ENCODE measurements at regions of chr15 and their contacts with region 1.

Region 1: DNA sequence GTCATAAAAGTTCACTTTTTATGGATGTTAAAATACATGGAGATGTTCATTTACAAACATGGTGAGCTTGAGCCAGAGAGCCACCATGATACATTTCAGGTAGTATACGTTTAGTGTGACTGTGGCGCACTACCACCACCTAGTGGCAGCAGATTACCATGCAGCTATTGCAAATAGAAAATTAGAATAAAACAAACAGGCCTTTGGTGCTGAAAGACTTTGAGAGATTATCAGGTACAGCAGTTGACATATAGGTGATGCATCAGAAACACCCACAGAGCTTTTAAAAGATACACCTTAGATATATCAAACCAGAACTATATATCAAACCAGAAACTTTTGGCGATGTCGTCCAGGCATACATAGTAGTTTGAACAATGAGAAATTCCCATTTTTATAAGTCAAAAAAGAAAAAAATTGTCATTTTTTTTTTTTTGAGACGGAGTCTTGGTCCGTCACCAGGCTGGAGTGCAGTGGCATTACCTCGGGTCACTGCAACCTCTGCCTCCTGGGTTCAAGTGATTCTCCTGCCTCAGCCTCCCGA is 42.0 kb upstream of the ICE2 start:
- DNase-seq: no peak
- ATAC-seq: peak; percentile 92
- H3K4me3 ChIP-seq: no peak overlapping the region
- H3K27ac ChIP-seq: peak overlapping the region; percentile 67
- H3K4me1 ChIP-seq: peaks cover 16% of the 10 kb centered on the region
- H3K27me3 ChIP-seq: no peaks in the 10 kb centered on the region
- CTCF ChIP-seq: peak; percentile 74 to 86 (median 86)
- EP300 ChIP-seq: no peak
- POLR2A ChIP-seq: no peak
- RAD21 ChIP-seq: peak; percentile 83

Region 2: GRCh38 chr15:60362321-60363086 is 158.4 kb before region 1 on chr15:
- CTCF ChIA-PET with region 1: interaction called, 74 read pairs
- POLR2A ChIA-PET with region 1: no interaction called
- RAD21 ChIA-PET with region 1: interaction called, 10 read pairs
- SMC1A ChIA-PET with region 1: interaction called, 20 read pairs
- in situ Hi-C with region 1: no loop called
- intact Hi-C with region 1: loop called (anchors 1 kb)
- DNase-seq: no peak
- ATAC-seq: no peak
- H3K4me3 ChIP-seq: no peak overlapping the region
- H3K27ac ChIP-seq: no peak overlapping the region
- H3K4me1 ChIP-seq: no peaks in the 10 kb centered on the region
- H3K27me3 ChIP-seq: no peaks in the 10 kb centered on the region
- CTCF ChIP-seq: no peak
- EP300 ChIP-seq: no peak
- POLR2A ChIP-seq: no peak
- RAD21 ChIP-seq: no peak

Region 3: DNA sequence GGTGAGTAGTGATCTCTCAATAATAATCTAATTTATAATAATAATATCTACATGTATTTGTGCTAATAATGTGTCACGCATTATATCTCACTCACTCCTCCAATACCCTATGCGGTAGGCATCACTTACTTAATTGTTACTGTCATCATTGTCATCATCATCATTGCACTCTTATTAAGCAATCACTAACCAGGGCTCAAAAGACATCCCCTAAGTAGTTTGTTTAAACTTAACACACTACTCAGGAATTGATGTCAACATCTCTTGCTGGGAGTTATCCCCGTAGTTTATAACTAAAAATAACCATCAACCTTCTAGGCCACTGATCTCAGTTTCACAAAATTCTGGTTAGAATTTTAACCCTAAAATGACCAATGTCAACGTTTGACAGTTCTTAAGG is 14.8 kb after region 1 on chr15:
- CTCF ChIA-PET with region 1: interaction called, 52 read pairs
- POLR2A ChIA-PET with region 1: interaction called, 4 read pairs
- RAD21 ChIA-PET with region 1: interaction called, 12 read pairs
- SMC1A ChIA-PET with region 1: interaction called, 33 read pairs
- in situ Hi-C with region 1: no loop called
- intact Hi-C with region 1: no loop called
- DNase-seq: no peak
- ATAC-seq: no peak
- H3K4me3 ChIP-seq: no peak overlapping the region
- H3K27ac ChIP-seq: no peak overlapping the region
- H3K4me1 ChIP-seq: 0 out of 2 replicates have a peak, but pooled peaks cover 3% of the 10 kb centered on the region
- H3K27me3 ChIP-seq: no peaks in the 10 kb centered on the region
- CTCF ChIP-seq: no peak
- EP300 ChIP-seq: no peak
- POLR2A ChIP-seq: no peak
- RAD21 ChIP-seq: no peak

Region 4: DNA sequence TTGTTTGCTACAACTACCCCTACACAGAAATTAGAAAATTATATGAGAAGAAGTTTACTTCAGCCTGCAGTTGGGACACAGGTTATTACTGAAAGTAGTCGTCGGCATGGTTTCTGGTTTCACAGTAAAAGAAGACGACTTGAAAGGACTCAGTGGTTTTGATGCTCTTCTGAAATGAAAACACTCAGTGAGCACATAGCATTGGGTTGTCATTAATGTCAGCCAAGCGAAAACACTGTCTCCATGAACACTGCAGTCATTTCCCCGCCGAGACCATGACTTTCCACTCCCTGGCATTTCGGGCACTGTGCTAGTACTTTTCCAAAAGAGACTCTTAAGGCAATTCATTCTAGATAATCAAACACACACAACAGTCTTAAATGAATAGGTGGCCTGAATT is 27.2 kb after region 1 on chr15:
- CTCF ChIA-PET with region 1: interaction called, 82 read pairs
- POLR2A ChIA-PET with region 1: interaction called, 3 read pairs
- RAD21 ChIA-PET with region 1: interaction called, 24 read pairs
- SMC1A ChIA-PET with region 1: interaction called, 27 read pairs
- in situ Hi-C with region 1: no loop called
- intact Hi-C with region 1: loop called (anchors 2 kb)
- DNase-seq: peak; percentile 85
- ATAC-seq: peak; percentile 86
- H3K4me3 ChIP-seq: peak overlapping the region; percentile 11; the same call in 1 of the 2 replicates
- H3K27ac ChIP-seq: peak overlapping the region; percentile 66
- H3K4me1 ChIP-seq: peaks cover 49% of the 10 kb centered on the region
- H3K27me3 ChIP-seq: no peaks in the 10 kb centered on the region
- CTCF ChIP-seq: no peak
- EP300 ChIP-seq: peak; percentile 66 to 76
- POLR2A ChIP-seq: no peak
- RAD21 ChIP-seq: peak; percentile 10; the same call in 1 of the 2 replicates

Region 5: DNA sequence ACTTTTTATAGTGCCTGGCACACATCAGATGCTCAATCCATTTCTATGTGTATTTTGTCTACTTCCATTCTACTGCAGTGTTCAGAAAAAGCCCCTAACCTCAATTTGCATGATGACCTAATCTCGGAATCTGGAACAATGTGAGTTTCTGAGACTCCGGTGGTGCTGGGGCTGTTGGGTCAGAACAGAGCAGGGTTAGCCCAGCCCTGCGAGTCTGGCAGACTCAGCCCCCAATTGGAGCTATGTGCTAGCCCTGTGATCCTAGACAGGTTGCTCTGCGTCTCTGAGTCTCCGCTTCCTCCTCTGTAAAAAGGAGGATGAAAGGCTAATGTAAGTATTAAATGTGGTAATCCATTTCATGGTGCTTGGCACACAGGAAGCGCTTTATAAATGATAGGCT is 53.0 kb after region 1 on chr15:
- CTCF ChIA-PET with region 1: interaction called, 16 read pairs
- POLR2A ChIA-PET with region 1: no interaction called
- RAD21 ChIA-PET with region 1: interaction called, 11 read pairs
- SMC1A ChIA-PET with region 1: interaction called, 41 read pairs
- in situ Hi-C with region 1: no loop called
- intact Hi-C with region 1: no loop called
- DNase-seq: no peak
- ATAC-seq: peak; percentile 82
- H3K4me3 ChIP-seq: peak overlapping the region; percentile 56; the same call in 1 of the 2 replicates
- H3K27ac ChIP-seq: peak overlapping the region; percentile 84
- H3K4me1 ChIP-seq: peaks cover 71% of the 10 kb centered on the region
- H3K27me3 ChIP-seq: no peaks in the 10 kb centered on the region
- CTCF ChIP-seq: no peak
- EP300 ChIP-seq: peak in 1 of 2 experiments; percentile 57; a peak in 1 of 4 replicates
- POLR2A ChIP-seq: peak; percentile 50; the same call in 1 of the 2 replicates
- RAD21 ChIP-seq: no peak

Region 6: GRCh38 chr15:60905587-60905986 is 384.7 kb after region 1 on chr15:
- CTCF ChIA-PET with region 1: interaction called, 12 read pairs
- POLR2A ChIA-PET with region 1: no interaction called
- RAD21 ChIA-PET with region 1: interaction called, 7 read pairs
- SMC1A ChIA-PET with region 1: no interaction called
- in situ Hi-C with region 1: no loop called
- intact Hi-C with region 1: no loop called
- DNase-seq: no peak
- ATAC-seq: peak; percentile 32
- H3K4me3 ChIP-seq: no peak overlapping the region
- H3K27ac ChIP-seq: no peak overlapping the region
- H3K4me1 ChIP-seq: peaks cover 26% of the 10 kb centered on the region
- H3K27me3 ChIP-seq: no peaks in the 10 kb centered on the region
- CTCF ChIP-seq: peak in 2 of 3 experiments; percentile 22 to 45; a peak in 3 of 6 replicates
- EP300 ChIP-seq: no peak
- POLR2A ChIP-seq: no peak
- RAD21 ChIP-seq: peak; percentile 52

Measured in GM12878 (cell line).